CD8-positive, alpha-beta memory T cell (primary cell): ENCODE measurements at regions of chr19 and their contacts with region 1.

Region 1: GRCh38 chr19:16062789-16063188 is 13.5 kb upstream of the TPM4 start:
- DNase-seq: peak; percentile 57 to 78 (median 61)
- H3K4me3 ChIP-seq: no peak overlapping the region
- H3K4me3 Mint-ChIP-seq: peak overlapping the region in 1 of 7 donors; percentile 56
- H3K27ac ChIP-seq: no peak overlapping the region
- H3K27ac Mint-ChIP-seq: peak overlapping the region in 1 of 8 donors; percentile 8
- H3K4me1 ChIP-seq: peaks cover 9% of the 10 kb centered on the region
- H3K4me1 Mint-ChIP-seq: peaks cover 16 to 21% (median 18%) of the 10 kb centered on the region in 3 donors
- H3K27me3 ChIP-seq: no peaks in the 10 kb centered on the region
- H3K27me3 Mint-ChIP-seq: peaks cover 0 to 3% of the 10 kb centered on the region in 2 donors

Region 2: DNA sequence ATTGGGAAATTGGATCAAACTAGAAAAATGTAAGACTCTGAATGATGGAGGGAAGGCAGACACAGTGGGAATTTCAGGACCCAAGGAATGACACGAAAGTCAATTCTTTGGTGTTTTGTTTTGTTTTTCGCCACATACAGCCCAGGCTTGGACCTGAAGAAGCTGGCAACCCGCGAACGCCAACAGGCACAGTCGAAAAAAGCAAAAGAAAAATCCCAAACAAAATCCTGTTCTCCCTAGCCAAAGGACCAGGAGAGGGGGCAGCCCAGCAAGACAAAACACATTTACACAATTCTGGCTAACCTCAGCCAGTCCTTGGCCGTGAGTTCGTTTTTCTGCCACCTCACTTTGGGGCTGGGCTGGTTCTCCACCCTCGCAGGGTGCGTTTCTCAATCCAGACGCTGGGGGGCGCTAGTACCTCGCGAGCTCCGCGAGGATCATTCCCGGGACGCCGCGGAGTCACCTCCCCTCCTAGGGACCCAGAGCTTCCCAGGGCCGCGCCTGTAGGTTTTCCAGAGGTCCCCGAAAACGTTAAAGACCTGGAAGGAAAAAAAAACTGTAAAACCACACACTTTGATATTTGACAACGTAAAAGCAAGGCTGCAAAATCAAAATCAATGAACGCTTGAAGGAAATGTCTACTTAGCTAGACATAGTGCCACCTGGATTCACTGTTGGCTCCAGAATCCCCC is 21.3 kb before region 1 on chr19:
- CTCF ChIA-PET with region 1: interaction called, 18 read pairs
- POLR2A ChIA-PET with region 1: no interaction called
- DNase-seq: peak; percentile 58 to 80 (median 67)
- H3K4me3 ChIP-seq: no peak overlapping the region
- H3K4me3 Mint-ChIP-seq: peak overlapping the region in 4 of 7 donors; percentile 31 to 50 (median 46)
- H3K27ac ChIP-seq: no peak overlapping the region
- H3K27ac Mint-ChIP-seq: no peak overlapping the region
- H3K4me1 ChIP-seq: peaks cover 9% of the 10 kb centered on the region
- H3K4me1 Mint-ChIP-seq: peaks cover 7 to 16% (median 14%) of the 10 kb centered on the region in 3 donors
- H3K27me3 ChIP-seq: no peaks in the 10 kb centered on the region
- H3K27me3 Mint-ChIP-seq: no peaks in the 10 kb centered on the region

Region 3: DNA sequence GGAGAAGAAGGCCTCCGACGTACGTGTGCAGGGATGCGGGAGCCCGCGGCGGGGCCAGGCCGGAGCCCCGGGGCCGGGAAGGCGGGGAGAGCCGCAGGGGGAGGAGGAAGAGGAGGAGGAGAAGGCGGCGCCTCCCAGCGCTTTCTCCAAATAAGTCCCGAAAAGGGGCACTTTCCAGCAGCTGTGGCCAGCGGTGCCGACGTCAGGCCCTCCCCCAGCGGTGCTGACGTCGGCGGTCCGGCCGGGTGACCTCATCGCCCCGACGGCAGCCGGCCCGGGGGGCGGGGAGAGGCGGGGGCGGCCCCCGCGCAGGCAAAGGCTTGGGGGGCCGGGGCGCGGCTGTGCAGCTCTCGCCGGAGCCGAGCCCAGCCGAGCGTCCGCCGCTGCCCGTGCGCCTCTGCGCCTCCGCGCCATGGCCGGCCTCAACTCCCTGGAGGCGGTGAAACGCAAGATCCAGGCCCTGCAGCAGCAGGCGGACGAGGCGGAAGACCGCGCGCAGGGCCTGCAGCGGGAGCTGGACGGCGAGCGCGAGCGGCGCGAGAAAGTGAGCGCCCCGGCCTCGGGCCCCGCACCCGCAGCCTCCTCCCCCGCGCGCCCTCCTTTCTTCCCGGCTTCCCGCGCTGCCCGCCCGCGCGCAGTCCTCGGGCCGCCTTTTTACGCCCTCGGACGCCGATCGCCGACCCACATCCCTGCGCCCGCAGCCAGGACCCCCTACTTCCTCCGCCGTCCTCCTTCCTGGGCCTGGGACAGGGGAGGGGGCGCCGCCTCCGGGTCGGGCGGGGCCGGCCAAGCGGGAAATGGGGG is 13.6 kb after region 1 on chr19 and contains the start of gene TPM4:
- CTCF ChIA-PET with region 1: interaction called, 71 read pairs
- POLR2A ChIA-PET with region 1: interaction called, 3 read pairs
- DNase-seq: peak; percentile 71 to 87 (median 82)
- H3K4me3 ChIP-seq: peak within 1 kb of the TSS; percentile 69
- H3K4me3 Mint-ChIP-seq: peak within 1 kb of the TSS; percentile 77 to 95 (median 88)
- H3K27ac ChIP-seq: peak within 1 kb of the TSS; percentile 83
- H3K27ac Mint-ChIP-seq: peak within 1 kb of the TSS; percentile 93 to 98 (median 98)
- H3K4me1 ChIP-seq: peaks cover 74% of the 10 kb centered on the region
- H3K4me1 Mint-ChIP-seq: peaks cover 58 to 78% (median 64%) of the 10 kb centered on the region in 3 donors
- H3K27me3 ChIP-seq: no peaks in the 10 kb centered on the region
- H3K27me3 Mint-ChIP-seq: peaks cover 0 to 1% of the 10 kb centered on the region in 2 donors
- total RNA-seq, gene TPM4: 259 to 270 TPM

Region 4: DNA sequence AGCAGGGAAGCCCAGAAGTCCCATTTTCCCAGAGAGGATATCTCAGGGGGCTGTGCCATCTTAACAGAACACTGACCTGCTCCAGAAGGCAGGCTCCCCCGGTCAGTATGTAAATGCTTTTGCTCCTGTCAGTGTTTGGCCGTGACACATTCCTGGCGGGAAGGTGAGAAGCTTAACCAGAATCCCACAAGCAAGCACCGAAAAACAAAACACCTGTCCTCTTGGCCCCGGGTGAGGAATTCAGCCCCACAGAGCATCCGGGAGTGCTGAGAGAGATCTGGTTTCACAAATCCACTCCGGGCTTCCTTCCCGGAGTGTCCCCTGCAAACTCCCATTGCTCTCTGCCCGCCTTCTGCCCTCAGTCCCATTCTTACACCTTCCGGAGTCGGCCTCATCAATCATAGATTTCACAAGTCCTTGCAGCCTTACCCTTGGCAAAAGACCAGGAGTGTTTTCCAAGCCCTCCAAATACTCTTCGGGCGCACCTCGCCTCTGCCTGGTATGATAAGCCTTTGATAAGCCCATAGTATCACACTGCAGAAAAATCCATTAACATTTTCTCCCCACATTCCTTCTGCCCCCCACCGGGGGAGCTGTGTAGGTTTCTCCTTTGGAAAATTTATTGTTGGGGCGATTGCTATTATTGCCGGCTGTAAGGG is 25.7 kb after region 1 on chr19:
- CTCF ChIA-PET with region 1: interaction called, 65 read pairs
- POLR2A ChIA-PET with region 1: no interaction called
- DNase-seq: no peak
- H3K4me3 ChIP-seq: no peak overlapping the region
- H3K4me3 Mint-ChIP-seq: peak overlapping the region in 1 of 7 donors; percentile 38
- H3K27ac ChIP-seq: no peak overlapping the region
- H3K27ac Mint-ChIP-seq: peak overlapping the region in 3 of 8 donors; percentile 41 to 80 (median 72)
- H3K4me1 ChIP-seq: peaks cover 30% of the 10 kb centered on the region
- H3K4me1 Mint-ChIP-seq: peaks cover 32 to 36% (median 35%) of the 10 kb centered on the region in 3 donors
- H3K27me3 ChIP-seq: no peaks in the 10 kb centered on the region
- H3K27me3 Mint-ChIP-seq: no peaks in the 10 kb centered on the region

Region 5: DNA sequence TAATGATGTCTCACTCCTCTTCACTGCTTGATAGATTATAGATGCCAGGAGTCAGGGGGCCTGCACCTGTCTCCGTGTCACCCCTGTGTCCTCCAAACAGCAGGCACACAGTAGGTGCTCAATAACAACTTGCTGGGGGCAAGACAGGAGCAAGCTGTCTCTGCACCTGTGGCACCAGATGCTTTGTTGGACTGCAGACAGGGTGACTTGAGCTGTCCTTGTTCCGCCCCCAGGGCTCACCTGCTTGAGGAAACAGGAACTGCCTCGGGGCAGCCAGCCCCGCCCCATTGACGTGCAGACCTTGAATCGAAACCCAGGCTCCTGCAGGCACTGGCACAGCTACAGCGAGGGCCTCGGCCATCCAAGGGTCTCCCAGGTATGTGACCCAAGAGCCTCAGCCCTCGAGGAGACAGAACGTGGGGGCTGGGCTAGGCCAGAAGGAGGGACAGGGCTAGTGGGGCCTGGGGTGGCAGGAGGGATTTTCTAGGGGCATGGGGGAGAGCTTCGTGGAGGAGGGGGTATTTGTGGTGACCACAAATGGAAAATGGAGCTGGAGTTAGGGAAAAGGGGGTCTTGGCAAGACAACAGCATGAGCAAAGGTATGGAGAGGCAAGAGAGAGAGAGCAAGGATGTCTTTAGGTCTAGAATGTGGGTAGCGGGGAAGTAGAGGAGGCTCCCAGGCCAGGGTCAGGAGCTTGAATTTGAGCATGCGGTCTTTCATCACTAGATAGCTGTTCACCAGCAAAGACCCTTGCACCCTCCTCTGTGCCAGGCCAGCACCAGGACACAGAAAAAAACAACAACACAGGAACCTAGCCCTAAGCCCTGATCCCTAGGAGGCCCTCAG is 80.8 kb after region 1 on chr19 and contains the start of gene HSH2D:
- CTCF ChIA-PET with region 1: interaction called, 10 read pairs
- POLR2A ChIA-PET with region 1: no interaction called
- DNase-seq: peak; percentile 63 to 86 (median 74)
- H3K4me3 ChIP-seq: peak within 1 kb of the TSS; percentile 90
- H3K4me3 Mint-ChIP-seq: peak within 1 kb of the TSS; percentile 90 to 97 (median 93)
- H3K27ac ChIP-seq: peak within 1 kb of the TSS; percentile 78
- H3K27ac Mint-ChIP-seq: peak within 1 kb of the TSS; percentile 82 to 98 (median 96)
- H3K4me1 ChIP-seq: peaks cover 28% of the 10 kb centered on the region
- H3K4me1 Mint-ChIP-seq: peaks cover 44 to 59% (median 54%) of the 10 kb centered on the region in 3 donors
- H3K27me3 ChIP-seq: no peaks in the 10 kb centered on the region
- H3K27me3 Mint-ChIP-seq: no peaks in the 10 kb centered on the region
- total RNA-seq, gene HSH2D: 8.6 to 9.3 TPM

Region 6: DNA sequence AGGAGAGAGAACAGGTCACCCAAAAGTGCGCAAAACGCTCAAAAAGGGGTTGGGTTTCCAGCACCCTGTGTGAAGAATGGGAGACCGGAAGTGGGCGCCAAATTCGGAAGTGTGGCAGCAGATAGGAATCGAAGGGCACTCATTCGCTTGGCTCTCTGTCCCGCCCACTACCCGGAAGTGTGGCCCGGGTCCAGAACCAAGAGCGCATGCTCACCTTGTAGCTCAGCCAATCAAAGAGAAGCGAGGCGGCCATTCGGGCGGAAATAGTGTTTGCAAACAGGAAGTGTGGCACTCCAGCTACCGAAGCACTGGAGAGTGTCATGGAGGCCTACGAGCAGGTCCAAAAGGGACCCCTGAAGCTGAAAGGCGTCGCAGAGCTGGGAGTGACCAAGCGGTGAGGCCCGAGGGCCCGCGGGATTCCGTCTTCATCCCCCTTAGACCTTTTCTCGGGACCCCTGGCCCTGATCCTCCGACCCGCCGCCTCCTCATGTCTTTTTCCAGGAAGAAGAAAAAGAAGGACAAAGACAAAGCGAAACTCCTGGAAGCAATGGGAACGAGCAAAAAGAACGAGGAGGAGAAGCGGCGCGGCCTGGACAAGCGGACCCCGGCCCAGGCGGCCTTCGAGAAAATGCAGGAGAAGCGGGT is 122.5 kb after region 1 on chr19 and contains the start of gene FAM32A:
- CTCF ChIA-PET with region 1: interaction called, 13 read pairs
- POLR2A ChIA-PET with region 1: no interaction called
- DNase-seq: peak; percentile 96 to 100 (median 99)
- H3K4me3 ChIP-seq: peak within 1 kb of the TSS; percentile 96
- H3K4me3 Mint-ChIP-seq: peak within 1 kb of the TSS; percentile 95 to 100 (median 98)
- H3K27ac ChIP-seq: peak within 1 kb of the TSS; percentile 74
- H3K27ac Mint-ChIP-seq: peak within 1 kb of the TSS; percentile 80 to 98 (median 96)
- H3K4me1 ChIP-seq: peaks cover 24% of the 10 kb centered on the region
- H3K4me1 Mint-ChIP-seq: peaks cover 30 to 50% (median 37%) of the 10 kb centered on the region in 3 donors
- H3K27me3 ChIP-seq: no peaks in the 10 kb centered on the region
- H3K27me3 Mint-ChIP-seq: peaks cover 0 to 2% of the 10 kb centered on the region in 2 donors
- total RNA-seq, gene FAM32A: 62.4 to 68.3 TPM